ENCODE measurements at regions of chr16 and their contacts with region 1.

Region 1: GRCh38 chr16:23877107-23878090 is 41.6 kb downstream of the PRKCB start:
- DNase-seq: peak in 16 of 35 experiments; percentile 5 to 48 (median 16)
- ATAC-seq: peak in 3 of 4 experiments; percentile 56 to 67 (median 56)
- H3K4me3 ChIP-seq: no peak overlapping the region
- H3K4me3 Mint-ChIP-seq: no peak overlapping the region
- H3K27ac ChIP-seq: no peak overlapping the region
- H3K27ac Mint-ChIP-seq: peak overlapping the region; percentile 38 to 39
- H3K4me1 ChIP-seq: peaks cover 19 to 44% of the 10 kb centered on the region in 2 experiments
- H3K4me1 Mint-ChIP-seq: peaks cover 80 to 82% (median 82%) of the 10 kb centered on the region in 3 donors
- H3K27me3 ChIP-seq: no peaks in the 10 kb centered on the region
- H3K27me3 Mint-ChIP-seq: no peaks in the 10 kb centered on the region

Region 2: DNA sequence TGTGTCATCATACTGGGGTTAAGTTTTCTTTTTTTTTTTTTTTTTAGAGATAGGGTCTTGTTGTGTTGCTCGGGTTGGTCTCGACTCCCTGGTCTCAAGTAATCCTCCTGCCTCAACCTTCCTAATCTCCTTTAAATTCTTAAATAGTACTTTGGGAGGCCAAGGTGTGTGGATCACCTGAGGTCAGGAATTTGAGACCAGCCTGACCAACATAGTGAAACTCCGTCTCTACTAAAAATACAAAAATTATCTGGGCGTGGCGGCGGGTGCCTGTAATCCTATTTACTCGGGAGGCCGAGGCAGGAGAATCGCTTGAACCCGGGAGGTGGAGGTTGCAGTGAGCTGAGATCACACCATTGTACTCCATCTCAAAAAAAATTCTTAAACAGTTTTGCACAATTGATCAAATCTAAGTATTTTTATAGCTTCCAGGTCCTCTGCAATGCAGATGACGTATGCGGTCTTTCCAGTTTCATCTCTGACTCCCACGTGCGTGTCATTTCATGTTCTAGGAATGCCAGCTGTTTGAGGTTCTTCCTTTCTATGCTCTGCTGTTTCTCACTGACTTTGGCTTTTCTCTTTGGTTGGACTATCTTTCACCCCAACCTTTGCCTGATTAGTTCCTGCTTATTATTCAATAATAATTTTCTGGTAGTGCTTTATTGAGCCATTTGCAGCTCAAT is 106.5 kb before region 1 on chr16:
- CTCF ChIA-PET with region 1: no interaction called
- POLR2A ChIA-PET with region 1: no interaction called
- DNase-seq: no peak
- ATAC-seq: no peak
- H3K4me3 ChIP-seq: no peak overlapping the region
- H3K4me3 Mint-ChIP-seq: no peak overlapping the region
- H3K27ac ChIP-seq: no peak overlapping the region
- H3K27ac Mint-ChIP-seq: no peak overlapping the region
- H3K4me1 ChIP-seq: no peaks in the 10 kb centered on the region
- H3K4me1 Mint-ChIP-seq: no peaks in the 10 kb centered on the region
- H3K27me3 ChIP-seq: peaks cover 0 to 11% of the 10 kb centered on the region in 2 experiments
- H3K27me3 Mint-ChIP-seq: peaks cover 0 to 7% of the 10 kb centered on the region in 2 donors

Region 3: DNA sequence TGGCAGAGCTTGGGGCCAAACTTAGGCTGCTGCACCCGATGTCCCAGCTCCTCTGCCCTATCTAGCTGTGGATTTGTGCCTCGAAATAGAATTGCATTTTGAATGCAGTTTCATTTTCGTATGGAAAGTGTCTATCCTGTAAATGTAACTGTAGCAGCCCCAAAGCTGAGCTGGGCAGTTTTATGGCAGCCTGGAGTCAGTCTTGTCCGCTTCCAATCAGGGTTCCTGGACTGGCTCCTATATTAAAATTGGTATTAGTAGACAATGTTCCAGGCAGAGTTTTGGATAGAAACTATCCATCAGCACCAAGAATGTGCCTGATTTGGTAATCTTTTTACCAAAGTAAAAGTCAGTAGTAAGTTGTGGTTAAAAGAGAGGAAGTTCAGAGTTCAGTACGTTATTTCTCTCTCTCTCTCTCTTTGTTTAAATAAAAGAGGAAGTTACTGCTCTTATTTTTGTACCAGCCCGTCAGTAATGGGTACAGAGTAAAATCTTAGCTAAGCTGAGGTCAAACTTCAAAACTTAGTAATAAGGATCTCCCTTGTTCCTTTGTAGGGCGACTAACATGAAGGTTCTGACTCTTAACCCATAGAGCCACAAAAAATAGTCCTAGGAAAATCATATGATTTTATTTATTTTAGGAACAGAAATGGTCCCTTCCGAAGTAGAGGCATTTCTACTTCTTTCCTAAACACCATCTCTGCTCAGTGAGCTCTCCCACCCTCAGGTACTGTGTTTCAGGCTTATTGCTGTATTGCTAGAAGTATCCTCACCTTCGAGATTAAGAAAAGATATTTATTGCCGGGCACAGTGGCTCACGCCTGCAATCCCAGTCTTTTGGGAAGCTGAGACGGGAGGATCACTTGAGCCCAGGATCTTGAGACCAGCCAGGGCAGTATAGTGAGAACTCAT is 13.6 kb before region 1 on chr16:
- CTCF ChIA-PET with region 1: interaction called in 1 of 2 experiments, 10 read pairs
- POLR2A ChIA-PET with region 1: no interaction called
- DNase-seq: peak in 6 of 35 experiments; percentile 3 to 59 (median 12)
- ATAC-seq: peak; percentile 87 to 93 (median 92)
- H3K4me3 ChIP-seq: peak overlapping the region; percentile 48 to 68
- H3K4me3 Mint-ChIP-seq: peak overlapping the region; percentile 74 to 82 (median 82)
- H3K27ac ChIP-seq: peak overlapping the region; percentile 77
- H3K27ac Mint-ChIP-seq: peak overlapping the region; percentile 88 to 92
- H3K4me1 ChIP-seq: peaks cover 38 to 46% of the 10 kb centered on the region in 2 experiments
- H3K4me1 Mint-ChIP-seq: peaks cover 83 to 87% (median 86%) of the 10 kb centered on the region in 3 donors
- H3K27me3 ChIP-seq: no peaks in the 10 kb centered on the region
- H3K27me3 Mint-ChIP-seq: no peaks in the 10 kb centered on the region

Region 4: DNA sequence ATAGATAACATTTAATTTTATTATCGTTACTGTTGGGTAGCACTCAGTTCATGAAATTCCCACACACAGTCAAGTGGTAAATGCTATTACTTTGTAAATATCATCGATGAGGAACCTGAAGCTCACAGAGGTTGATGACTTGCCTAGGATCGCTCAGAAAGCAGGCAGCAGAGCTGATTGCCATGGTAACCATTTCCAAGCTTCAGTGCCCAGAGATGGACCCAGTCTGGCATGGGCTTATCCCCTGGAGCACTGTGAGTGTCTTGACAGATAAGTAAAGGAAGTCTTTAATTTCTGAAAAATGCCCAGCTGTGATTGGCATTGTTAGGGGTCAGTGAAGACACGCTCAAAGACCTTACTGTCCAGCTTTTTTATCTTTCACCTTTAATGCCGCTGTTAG is 53.4 kb after region 1 on chr16:
- CTCF ChIA-PET with region 1: no interaction called
- POLR2A ChIA-PET with region 1: interaction called in 1 of 2 experiments, 14 read pairs
- DNase-seq: no peak
- ATAC-seq: no peak
- H3K4me3 ChIP-seq: no peak overlapping the region
- H3K4me3 Mint-ChIP-seq: no peak overlapping the region
- H3K27ac ChIP-seq: no peak overlapping the region
- H3K27ac Mint-ChIP-seq: no peak overlapping the region
- H3K4me1 ChIP-seq: peaks cover 0 to 6% of the 10 kb centered on the region in 2 experiments
- H3K4me1 Mint-ChIP-seq: peaks cover 62 to 67% (median 66%) of the 10 kb centered on the region in 3 donors
- H3K27me3 ChIP-seq: no peaks in the 10 kb centered on the region
- H3K27me3 Mint-ChIP-seq: no peaks in the 10 kb centered on the region

Region 5: GRCh38 chr16:24010440-24011089 is 133.2 kb after region 1 on chr16:
- CTCF ChIA-PET with region 1: interaction called, 17 to 24 read pairs
- POLR2A ChIA-PET with region 1: interaction called in 1 of 2 experiments, 3 read pairs
- DNase-seq: peak; percentile 58 to 92 (median 77)
- ATAC-seq: peak; percentile 21 to 41 (median 32)
- H3K4me3 ChIP-seq: no peak overlapping the region
- H3K4me3 Mint-ChIP-seq: no peak overlapping the region
- H3K27ac ChIP-seq: no peak overlapping the region
- H3K27ac Mint-ChIP-seq: peak overlapping the region in 1 of 2 donors; percentile 52
- H3K4me1 ChIP-seq: peaks cover 24 to 46% of the 10 kb centered on the region in 2 experiments
- H3K4me1 Mint-ChIP-seq: peaks cover 68 to 83% (median 69%) of the 10 kb centered on the region in 3 donors
- H3K27me3 ChIP-seq: no peaks in the 10 kb centered on the region
- H3K27me3 Mint-ChIP-seq: no peaks in the 10 kb centered on the region

Region 6: DNA sequence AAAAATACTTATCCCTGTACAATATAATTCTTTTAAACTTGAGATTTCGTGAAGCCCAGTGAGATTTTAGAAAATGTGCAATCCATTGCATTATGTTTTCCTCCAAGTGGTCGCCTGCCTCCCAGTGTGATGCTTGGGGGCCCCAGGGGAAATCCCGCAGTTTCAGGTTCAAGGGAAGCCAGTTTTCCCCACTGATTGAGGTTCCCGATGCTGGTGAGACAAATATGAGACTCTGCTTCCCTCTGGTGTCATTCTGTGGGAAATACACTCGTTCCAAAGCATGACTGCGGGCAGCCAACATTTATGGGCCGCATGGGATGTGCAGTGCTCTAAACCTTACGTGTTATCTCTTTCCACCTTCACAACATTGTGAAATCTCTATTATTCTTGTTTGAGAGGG is 159.2 kb after region 1 on chr16:
- CTCF ChIA-PET with region 1: interaction called, 6 to 12 read pairs
- POLR2A ChIA-PET with region 1: no interaction called
- DNase-seq: peak in 18 of 35 experiments; percentile 5 to 71 (median 18)
- ATAC-seq: peak in 1 of 4 experiments; percentile 50
- H3K4me3 ChIP-seq: no peak overlapping the region
- H3K4me3 Mint-ChIP-seq: peak overlapping the region; percentile 3 to 36 (median 24)
- H3K27ac ChIP-seq: no peak overlapping the region
- H3K27ac Mint-ChIP-seq: peak overlapping the region; percentile 44 to 48
- H3K4me1 ChIP-seq: peaks cover 16 to 50% of the 10 kb centered on the region in 2 experiments
- H3K4me1 Mint-ChIP-seq: peaks cover 46 to 51% (median 47%) of the 10 kb centered on the region in 3 donors
- H3K27me3 ChIP-seq: no peaks in the 10 kb centered on the region
- H3K27me3 Mint-ChIP-seq: no peaks in the 10 kb centered on the region

Measured in T-cell (primary cell).